Sigmoid colon (tissue), 7 donors: ENCODE measurements at regions of chr13 and their contacts with region 1.

Region 1: DNA sequence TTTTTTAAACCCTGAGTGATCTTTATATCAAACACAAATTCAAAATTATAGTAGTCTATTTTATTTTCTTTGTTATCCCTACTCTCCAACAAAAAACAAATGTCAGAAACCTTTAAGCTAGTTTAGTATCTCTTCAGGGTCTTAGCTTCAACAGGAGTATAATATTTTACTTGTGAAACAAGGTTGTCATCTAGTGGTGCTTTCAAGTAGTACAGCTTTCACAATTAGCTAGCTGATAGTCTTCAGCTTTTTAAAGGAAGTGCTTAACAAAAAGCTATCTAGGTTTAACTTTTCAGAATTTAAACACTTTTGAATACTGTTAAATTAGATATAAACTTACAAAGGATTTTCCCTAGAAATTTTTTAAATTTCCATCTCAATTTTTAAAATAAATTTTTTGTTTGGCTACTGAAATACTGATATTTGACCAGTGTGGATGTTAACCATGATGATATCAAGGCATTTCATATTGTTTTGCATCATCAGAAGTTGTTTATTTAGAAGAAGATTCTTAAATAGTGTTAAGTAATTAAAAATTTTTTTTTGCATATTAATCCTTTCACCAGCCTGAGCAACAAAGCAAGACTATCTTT is 34.2 kb downstream of the TDRD3 start:
- DNase-seq: no peak
- H3K4me3 ChIP-seq: no peak overlapping the region
- H3K27ac ChIP-seq: no peak overlapping the region
- H3K4me1 ChIP-seq: no peaks in the 10 kb centered on the region
- H3K27me3 ChIP-seq: no peaks in the 10 kb centered on the region
- CTCF ChIP-seq: peak; percentile 75 to 94 (median 92)
- EP300 ChIP-seq: no peak
- POLR2A ChIP-seq: no peak

Region 2: GRCh38 chr13:60163478-60164233 is 267.5 kb before region 1 on chr13 and contains the start of gene DIAPH3:
- intact Hi-C with region 1: loop called (anchors 10 kb)
- DNase-seq: peak; percentile 97
- H3K4me3 ChIP-seq: peak within 1 kb of the TSS; percentile 60 to 79 (median 65)
- H3K27ac ChIP-seq: peak within 1 kb of the TSS; percentile 88 to 92 (median 90)
- H3K4me1 ChIP-seq: peaks cover 0 to 18% (median 14%) of the 10 kb centered on the region in 4 donors
- H3K27me3 ChIP-seq: no peaks in the 10 kb centered on the region
- CTCF ChIP-seq: no peak
- EP300 ChIP-seq: no peak
- POLR2A ChIP-seq: peak; percentile 74 to 76
- total RNA-seq, gene DIAPH3: 0.16 to 1.9 (median 1.1) TPM in 3 of 4 donors, not detected in the other

Region 3: GRCh38 chr13:60396783-60397703 is 34.2 kb before region 1 on chr13 and contains the start of gene TDRD3:
- intact Hi-C with region 1: loop called (anchors 2 kb)
- DNase-seq: peak; percentile 92
- H3K4me3 ChIP-seq: peak within 1 kb of the TSS; percentile 77 to 82 (median 80)
- H3K27ac ChIP-seq: peak within 1 kb of the TSS; percentile 95 to 99 (median 98)
- H3K4me1 ChIP-seq: peaks cover 0 to 24% (median 20%) of the 10 kb centered on the region in 4 donors
- H3K27me3 ChIP-seq: no peaks in the 10 kb centered on the region
- CTCF ChIP-seq: peak; percentile 60 to 82 (median 70)
- EP300 ChIP-seq: no peak
- POLR2A ChIP-seq: peak; percentile 58 to 66
- total RNA-seq, gene TDRD3: 27.4 to 43.5 (median 41.4) TPM